GM12878 (cell line): ENCODE measurements at regions of chr22 and their contacts with region 1.

Region 1: DNA sequence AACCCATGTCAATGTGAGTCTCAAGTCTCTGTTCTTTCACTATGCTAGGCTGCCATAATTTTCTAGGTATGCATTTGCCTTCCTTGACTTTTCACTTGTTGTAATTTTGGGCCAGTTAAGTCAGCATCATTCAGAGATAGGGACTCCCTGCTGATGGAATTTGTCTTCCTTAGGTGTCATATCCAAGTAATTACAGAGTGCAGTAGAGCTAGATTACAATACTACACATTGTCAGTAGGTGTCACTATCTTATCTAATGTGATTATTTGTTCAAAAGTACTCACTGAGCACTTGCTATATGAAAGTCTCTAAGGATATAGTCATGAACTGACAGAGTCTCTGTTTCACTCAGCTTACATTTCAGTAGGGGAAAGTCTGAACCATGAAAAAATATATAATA is 25.0 kb upstream of the SYN3 start:
- DNase-seq: peak; percentile 13
- ATAC-seq: peak; percentile 80
- H3K4me3 ChIP-seq: no peak overlapping the region
- H3K27ac ChIP-seq: no peak overlapping the region
- H3K4me1 ChIP-seq: no peaks in the 10 kb centered on the region
- H3K27me3 ChIP-seq: no peaks in the 10 kb centered on the region
- CTCF ChIP-seq: peak in 1 of 3 experiments; percentile 36; a peak in 4 of 6 replicates
- EP300 ChIP-seq: no peak
- POLR2A ChIP-seq: no peak
- RAD21 ChIP-seq: 0 out of 2 replicates have a peak, but pooled peaks have one; percentile 25

Region 2: DNA sequence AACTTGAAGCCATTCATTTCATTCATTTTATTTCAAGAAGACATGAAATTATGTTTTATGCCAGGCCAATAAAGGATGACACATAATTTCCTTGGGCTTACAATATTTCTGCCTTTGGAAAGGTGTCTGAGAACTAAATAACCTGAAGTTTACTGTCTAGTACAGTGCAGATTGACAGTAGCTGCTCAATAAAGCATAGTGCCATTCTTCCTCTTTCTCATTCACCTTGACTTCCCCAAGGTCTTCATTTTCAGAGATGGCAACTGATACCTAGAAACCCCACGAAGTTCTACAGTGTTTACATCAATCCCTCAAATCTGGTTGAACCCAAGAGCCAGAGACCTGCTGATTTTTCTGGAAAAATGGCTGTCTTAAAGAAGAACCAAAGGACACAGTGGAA is 119.2 kb after region 1 on chr22:
- CTCF ChIA-PET with region 1: interaction called, 57 read pairs
- POLR2A ChIA-PET with region 1: no interaction called
- RAD21 ChIA-PET with region 1: interaction called, 3 read pairs
- SMC1A ChIA-PET with region 1: interaction called, 22 read pairs
- in situ Hi-C with region 1: loop called (anchors 5 kb)
- intact Hi-C with region 1: loop called (anchors 1 kb)
- DNase-seq: no peak
- ATAC-seq: no peak
- H3K4me3 ChIP-seq: no peak overlapping the region
- H3K27ac ChIP-seq: no peak overlapping the region
- H3K4me1 ChIP-seq: peaks cover 4% of the 10 kb centered on the region; the same call in 1 of the 2 replicates
- H3K27me3 ChIP-seq: no peaks in the 10 kb centered on the region
- CTCF ChIP-seq: no peak
- EP300 ChIP-seq: no peak
- POLR2A ChIP-seq: no peak
- RAD21 ChIP-seq: no peak